OCI-LY7 (cell line): ENCODE measurements at regions of chr2 and their contacts with region 1.

Region 1: DNA sequence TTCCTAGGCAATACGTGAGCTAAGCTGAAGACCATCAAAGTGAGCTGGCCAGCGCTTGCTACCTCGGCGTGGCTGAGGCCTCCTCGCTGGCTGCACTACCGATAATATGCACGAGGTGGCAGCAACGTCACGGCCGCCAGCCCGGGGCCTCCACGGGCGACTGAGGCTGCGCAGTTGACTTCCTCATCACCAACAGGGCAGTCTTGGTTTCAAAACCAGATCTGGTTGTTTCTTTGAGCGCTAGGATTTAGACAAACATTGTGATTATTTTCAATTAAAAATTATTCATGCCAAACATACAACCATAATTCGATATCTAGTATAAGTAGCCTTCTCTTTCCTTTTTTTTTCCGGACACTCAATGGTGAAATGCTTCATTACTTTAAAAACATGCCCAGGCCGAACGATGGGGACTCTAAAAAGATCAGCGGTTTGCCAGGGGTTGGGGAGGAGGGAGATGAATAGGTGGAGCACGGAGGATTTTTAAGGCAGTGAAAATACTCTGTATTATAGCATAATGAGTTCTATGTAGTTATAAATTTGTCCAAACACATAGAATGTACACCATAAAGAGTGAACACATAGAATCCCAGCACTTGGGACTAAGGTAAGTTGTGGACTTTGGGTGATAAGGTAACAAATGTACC is 52.0 kb downstream of the CYBRD1 start:
- DNase-seq: peak; percentile 70
- H3K4me3 ChIP-seq: no peak overlapping the region
- H3K27ac ChIP-seq: no peak overlapping the region
- H3K4me1 ChIP-seq: no peaks in the 10 kb centered on the region
- CTCF ChIP-seq: peak; percentile 97

Region 2: DNA sequence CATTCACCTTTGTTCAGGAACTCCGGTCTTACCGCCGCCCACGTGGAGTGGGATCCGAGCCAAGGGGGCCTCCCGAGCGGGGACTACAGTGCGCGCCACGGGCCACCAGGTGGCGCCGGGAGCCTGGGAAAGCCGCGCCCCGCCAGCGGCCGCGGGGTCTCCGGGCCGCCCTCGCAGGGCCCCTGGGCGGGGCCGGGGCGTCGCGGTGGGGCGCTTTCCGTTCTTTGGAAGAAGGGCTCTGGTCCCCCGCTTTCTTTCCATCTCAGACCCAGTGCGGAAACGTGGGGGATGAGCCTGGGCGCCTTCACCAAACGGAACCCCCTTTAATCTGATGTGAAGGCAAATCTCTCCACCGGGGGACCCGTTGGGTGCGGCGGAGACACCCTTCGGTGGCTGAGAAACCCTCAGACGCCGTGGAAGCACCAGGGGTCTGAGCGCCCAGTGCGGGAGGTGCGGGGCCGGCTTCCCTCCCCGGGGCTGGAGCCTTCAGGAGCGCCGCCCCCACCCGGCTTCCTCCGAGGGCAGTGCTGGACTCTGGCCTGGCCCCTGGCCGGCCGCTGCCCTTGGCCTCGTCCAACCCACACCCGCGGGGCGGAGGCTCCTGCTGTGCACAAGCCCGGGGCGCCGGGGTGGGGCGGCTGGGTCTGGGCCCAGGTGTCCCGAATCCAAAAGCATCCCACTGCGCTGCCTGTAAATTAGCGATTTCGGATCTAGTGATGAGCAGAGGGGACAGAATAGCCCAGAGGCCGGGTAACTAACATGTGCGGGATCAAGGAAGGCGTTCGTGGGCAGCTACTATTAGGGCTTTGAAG is 600.6 kb before region 1 on chr2:
- CTCF ChIA-PET with region 1: no interaction called
- POLR2A ChIA-PET with region 1: no interaction called
- intact Hi-C with region 1: loop called (anchors 10 kb)
- DNase-seq: peak; percentile 87
- H3K4me3 ChIP-seq: peak overlapping the region; percentile 70
- H3K27ac ChIP-seq: no peak overlapping the region
- H3K4me1 ChIP-seq: peaks cover 16% of the 10 kb centered on the region
- CTCF ChIP-seq: peak; percentile 98

Region 3: DNA sequence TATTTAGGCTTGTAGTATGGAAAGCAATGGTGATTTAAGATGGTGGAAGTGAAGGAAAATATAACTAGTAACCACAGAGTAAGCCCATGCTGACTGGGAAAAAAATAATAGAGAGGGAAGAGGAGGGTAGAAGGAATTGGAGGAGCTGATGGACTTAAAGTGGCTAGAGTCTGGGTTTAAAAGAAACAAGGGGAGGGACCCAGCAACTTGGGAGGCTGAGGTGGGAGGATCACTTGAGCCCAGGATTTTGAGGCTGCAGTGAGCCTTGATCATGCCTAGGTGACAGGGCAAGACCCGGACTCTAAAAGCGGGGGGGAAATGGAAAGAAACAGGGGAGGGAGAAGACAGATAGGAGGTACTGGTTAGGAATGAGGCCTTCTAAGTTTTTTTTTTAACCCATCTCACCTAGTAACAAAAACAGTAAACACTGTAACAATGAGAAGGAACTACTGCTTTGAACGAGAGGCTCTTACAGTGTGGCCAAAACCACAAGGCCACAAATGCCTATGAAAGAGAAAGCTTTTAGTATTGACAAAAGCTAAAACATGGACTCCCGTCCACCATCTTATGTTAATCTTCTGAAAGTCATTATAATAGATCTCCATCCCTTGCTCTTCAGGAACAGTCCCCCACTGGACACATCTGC is 167.1 kb before region 1 on chr2:
- CTCF ChIA-PET with region 1: no interaction called
- POLR2A ChIA-PET with region 1: no interaction called
- intact Hi-C with region 1: no loop called
- DNase-seq: no peak
- H3K4me3 ChIP-seq: no peak overlapping the region
- H3K27ac ChIP-seq: peak overlapping the region; percentile 49
- H3K4me1 ChIP-seq: peaks cover 44% of the 10 kb centered on the region
- CTCF ChIP-seq: no peak

Region 4: DNA sequence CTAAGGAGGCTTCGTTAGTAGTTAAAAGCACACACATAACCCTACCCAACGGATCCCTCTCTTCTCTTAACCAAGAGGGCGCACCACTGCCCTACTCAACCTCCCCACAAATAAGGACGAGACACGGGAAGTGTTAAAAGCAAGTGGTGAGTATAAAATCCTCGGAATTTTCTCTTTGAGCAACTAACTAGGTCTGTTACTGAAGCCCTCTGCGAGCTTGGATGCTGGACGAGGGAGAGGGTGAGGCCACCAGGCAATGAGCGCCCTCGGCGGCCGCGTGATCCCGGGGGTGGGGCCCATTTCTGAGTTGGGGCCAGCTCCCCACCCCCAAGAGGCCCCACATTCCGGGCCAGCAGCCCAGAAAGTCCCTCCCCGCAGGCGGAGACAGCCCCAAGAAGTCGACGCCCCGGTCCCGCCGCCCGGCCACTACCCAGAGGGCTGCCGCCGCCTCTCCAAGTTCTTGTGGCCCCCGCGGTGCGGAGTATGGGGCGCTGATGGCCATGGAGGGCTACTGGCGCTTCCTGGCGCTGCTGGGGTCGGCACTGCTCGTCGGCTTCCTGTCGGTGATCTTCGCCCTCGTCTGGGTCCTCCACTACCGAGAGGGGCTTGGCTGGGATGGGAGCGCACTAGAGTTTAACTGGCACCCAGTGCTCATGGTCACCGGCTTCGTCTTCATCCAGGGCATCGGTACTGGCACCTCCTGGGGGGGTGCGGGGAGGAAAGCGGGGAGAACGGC is 52.1 kb before region 1 on chr2 and contains the start of gene CYBRD1:
- CTCF ChIA-PET with region 1: no interaction called
- POLR2A ChIA-PET with region 1: no interaction called
- intact Hi-C with region 1: no loop called
- DNase-seq: no peak
- H3K4me3 ChIP-seq: no peak within 1 kb of the TSS
- H3K27ac ChIP-seq: no peak within 1 kb of the TSS
- H3K4me1 ChIP-seq: no peaks in the 10 kb centered on the region
- CTCF ChIP-seq: no peak
- total RNA-seq, gene CYBRD1: not detected in 2 replicates

Region 5: GRCh38 chr2:171703574-171704347 is 129.5 kb after region 1 on chr2:
- CTCF ChIA-PET with region 1: no interaction called
- POLR2A ChIA-PET with region 1: no interaction called
- intact Hi-C with region 1: loop called (anchors 2 kb)
- DNase-seq: peak; percentile 56
- H3K4me3 ChIP-seq: no peak overlapping the region
- H3K27ac ChIP-seq: no peak overlapping the region
- H3K4me1 ChIP-seq: peaks cover 9% of the 10 kb centered on the region
- CTCF ChIP-seq: peak; percentile 81

Region 6: DNA sequence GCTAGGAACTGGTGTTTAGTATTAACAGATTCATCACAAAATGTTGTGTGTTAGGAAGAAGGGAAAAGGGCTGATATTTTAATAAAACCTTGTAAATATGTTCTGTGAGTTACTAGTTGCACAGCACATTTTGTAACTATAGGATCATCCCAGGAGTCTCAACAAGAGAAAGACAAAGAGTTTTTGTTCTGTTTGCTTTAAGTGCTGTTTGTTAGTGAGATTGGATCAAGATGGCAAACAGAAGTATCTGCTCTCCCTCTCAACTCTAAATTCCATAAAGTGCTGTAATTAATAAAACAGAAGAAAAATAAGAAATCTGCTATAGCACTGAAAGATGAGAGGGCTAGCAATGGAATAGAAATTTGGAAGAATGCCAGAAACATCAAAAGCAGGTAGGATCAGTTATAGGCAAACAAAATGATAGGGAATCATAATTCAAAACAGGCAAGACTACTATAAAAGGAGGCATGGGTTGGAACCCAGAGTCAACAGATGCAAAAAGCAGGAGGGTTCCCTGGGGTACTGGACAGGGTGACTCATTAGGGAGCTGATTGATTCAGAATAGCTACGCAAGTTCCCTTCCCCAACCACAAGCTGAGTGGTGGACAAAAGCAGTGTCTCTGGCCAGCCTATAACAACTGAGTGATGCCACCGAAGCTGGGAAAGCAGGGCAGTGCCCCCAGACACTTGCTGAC is 188.8 kb after region 1 on chr2:
- CTCF ChIA-PET with region 1: no interaction called
- POLR2A ChIA-PET with region 1: no interaction called
- intact Hi-C with region 1: loop called (anchors 10 kb)
- DNase-seq: no peak
- H3K4me3 ChIP-seq: no peak overlapping the region
- H3K27ac ChIP-seq: no peak overlapping the region
- H3K4me1 ChIP-seq: no peaks in the 10 kb centered on the region
- CTCF ChIP-seq: no peak